ENCODE measurements at regions of chr6 and their contacts with region 1.

Region 1: GRCh38 chr6:9834233-9834632 is 580.6 kb downstream of the TFAP2A start:
- DNase-seq: peak; percentile 90
- H3K4me3 ChIP-seq: no peak overlapping the region
- H3K27ac ChIP-seq: peak overlapping the region; percentile 61
- H3K4me1 ChIP-seq: peaks cover 8% of the 10 kb centered on the region
- H3K27me3 ChIP-seq: no peaks in the 10 kb centered on the region
- CTCF ChIP-seq: no peak
- POLR2A ChIP-seq: no peak

Region 2: DNA sequence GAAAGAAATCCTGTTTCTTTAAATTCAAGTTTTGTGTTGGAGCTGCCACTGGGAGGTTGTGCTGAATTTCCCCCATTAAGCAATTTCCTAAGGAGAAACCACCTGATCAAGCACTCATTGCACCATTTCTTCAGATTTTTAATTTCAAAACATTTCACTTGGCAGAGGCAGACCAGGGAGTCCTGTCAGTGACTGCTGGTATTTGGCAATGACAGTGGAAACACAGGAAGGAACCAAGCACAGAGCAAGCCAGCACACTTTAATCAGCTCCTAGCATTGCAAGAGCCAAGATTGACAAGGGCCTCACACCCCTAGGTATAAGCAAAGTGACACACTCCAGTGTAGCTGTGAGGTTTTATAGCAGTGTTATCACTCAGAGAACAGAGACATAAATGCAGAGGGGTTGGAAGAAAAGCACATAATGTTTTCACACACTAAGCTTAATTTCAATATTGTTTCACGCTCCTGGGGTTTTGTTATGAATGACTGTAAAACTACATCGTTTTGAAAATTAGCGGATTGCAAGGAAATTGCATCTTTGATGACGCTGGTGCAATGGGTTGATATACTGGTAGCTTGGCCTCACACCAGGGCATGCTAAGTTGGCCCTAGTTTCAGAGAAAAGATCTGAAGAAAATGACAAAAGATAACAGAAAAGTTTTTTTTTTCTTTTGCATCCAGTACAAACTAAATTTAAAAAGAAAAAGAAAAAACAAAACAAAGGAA is 187.7 kb before region 1 on chr6:
- CTCF ChIA-PET with region 1: no interaction called
- POLR2A ChIA-PET with region 1: no interaction called
- dilution Hi-C with region 1: no loop called
- intact Hi-C with region 1: loop called (anchors 1 kb)
- DNase-seq: peak; percentile 78
- H3K4me3 ChIP-seq: no peak overlapping the region
- H3K27ac ChIP-seq: peak overlapping the region; percentile 58
- H3K4me1 ChIP-seq: peaks cover 40% of the 10 kb centered on the region
- H3K27me3 ChIP-seq: no peaks in the 10 kb centered on the region
- CTCF ChIP-seq: no peak
- POLR2A ChIP-seq: no peak